ENCODE measurements at regions of chr4 and their contacts with region 1.

Region 1: GRCh38 chr4:152408514-152409327 is 127.2 kb downstream of the FBXW7 start:
- DNase-seq: no peak
- ATAC-seq: peak in 2 of 4 donors; percentile 36 to 52
- H3K4me3 ChIP-seq: no peak overlapping the region
- H3K27ac ChIP-seq: no peak overlapping the region
- H3K4me1 ChIP-seq: no peaks in the 10 kb centered on the region
- H3K27me3 ChIP-seq: no peaks in the 10 kb centered on the region
- CTCF ChIP-seq: peak; percentile 46

Region 2: DNA sequence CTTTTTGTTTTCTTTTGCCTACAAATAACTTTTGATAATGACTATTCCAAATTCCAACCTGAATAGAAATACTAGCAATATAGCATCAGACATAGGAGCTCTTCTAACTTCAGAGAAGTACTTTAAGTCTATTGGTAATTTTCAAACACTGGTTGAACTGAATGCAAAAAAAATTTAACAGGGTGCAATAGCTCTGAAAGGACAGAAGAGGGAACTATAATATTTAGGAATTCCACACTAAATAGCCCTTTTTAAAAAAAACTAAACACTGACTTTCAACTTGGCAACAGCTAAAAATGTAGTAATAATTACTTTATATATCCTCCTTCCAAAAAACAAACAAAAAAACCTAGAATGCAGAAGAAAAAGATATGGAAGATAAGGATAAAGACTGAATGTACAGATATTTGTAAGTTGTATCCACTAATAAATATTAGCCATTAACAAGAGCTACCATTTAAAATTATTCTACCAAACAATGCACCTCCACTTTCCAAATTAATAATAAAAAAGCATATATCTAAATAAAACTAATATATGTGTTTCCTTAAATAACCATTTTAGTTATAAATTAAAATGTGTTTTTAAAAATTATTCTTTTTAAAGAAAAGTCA is 45.8 kb after region 1 on chr4:
- intact Hi-C with region 1: no loop called
- DNase-seq: no peak
- ATAC-seq: no peak
- H3K4me3 ChIP-seq: no peak overlapping the region
- H3K27ac ChIP-seq: no peak overlapping the region
- H3K4me1 ChIP-seq: no peaks in the 10 kb centered on the region
- H3K27me3 ChIP-seq: no peaks in the 10 kb centered on the region
- CTCF ChIP-seq: peak; percentile 38

Region 3: DNA sequence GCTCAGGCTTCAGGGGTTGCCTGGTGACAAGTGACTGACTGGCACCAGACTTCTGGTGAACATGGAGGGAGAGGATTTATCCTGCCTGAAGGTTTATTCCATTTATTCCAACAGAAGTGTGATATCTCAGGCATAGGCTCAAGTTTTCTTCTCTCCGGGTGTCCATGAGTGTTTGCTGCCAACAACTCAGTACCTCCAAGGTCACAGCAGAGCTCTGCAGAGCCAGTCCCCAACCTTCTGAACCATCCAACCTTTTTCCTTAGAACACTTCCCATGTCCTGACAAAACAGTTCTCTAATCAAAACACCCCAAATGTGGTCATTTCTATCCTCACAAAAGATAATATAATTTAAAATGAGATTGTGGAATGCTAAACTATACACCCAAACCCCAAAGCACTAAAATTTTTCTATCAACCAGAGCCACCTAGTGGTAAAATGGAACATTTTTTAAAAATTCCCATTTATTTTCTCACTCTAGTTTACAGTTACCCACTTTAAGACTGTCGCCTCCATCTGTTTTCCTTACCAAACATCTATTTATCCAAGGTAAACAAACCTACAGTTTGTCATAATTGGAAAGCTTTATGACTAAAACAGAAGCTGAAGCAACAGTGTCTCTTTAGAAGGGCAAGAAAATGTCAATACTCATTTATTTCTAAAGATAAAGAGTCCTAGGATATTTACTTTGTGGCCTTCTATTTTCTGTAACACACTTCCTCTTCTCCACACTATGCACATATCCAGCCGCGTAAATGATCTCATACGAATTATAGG is 231.5 kb after region 1 on chr4:
- intact Hi-C with region 1: loop called in 1 of 2 experiments (anchors 10 kb)
- DNase-seq: no peak
- ATAC-seq: no peak
- H3K4me3 ChIP-seq: no peak overlapping the region
- H3K27ac ChIP-seq: no peak overlapping the region
- H3K4me1 ChIP-seq: no peaks in the 10 kb centered on the region
- H3K27me3 ChIP-seq: no peaks in the 10 kb centered on the region
- CTCF ChIP-seq: peak; percentile 62